Activated CD4-positive, alpha-beta T cell treated with anti-CD3 and anti-CD28 coated beads, Interleukin-2, amount 10 ng/mL, durations not matched to agents 24 days and 14 days (primary cell): ENCODE measurements at regions of chr5 and their contacts with region 1.

Region 1: GRCh38 chr5:74640450-74640953 is at the start of gene ENC1:
- DNase-seq: peak; percentile 93
- H3K4me3 Mint-ChIP-seq: peak within 1 kb of the TSS; percentile 91
- H3K27ac Mint-ChIP-seq: peak within 1 kb of the TSS; percentile 47
- H3K4me1 Mint-ChIP-seq: peaks cover 35% of the 10 kb centered on the region
- H3K27me3 Mint-ChIP-seq: peaks cover 63% of the 10 kb centered on the region
- total RNA-seq, gene ENC1: 1.2 and 2.0 TPM in 2 replicates

Region 2: GRCh38 chr5:73792687-73793320 is 847.7 kb before region 1 on chr5:
- intact Hi-C with region 1: loop called (anchors 10 kb)
- DNase-seq: peak; percentile 88
- H3K4me3 Mint-ChIP-seq: no peak overlapping the region
- H3K27ac Mint-ChIP-seq: no peak overlapping the region
- H3K4me1 Mint-ChIP-seq: peaks cover 6% of the 10 kb centered on the region
- H3K27me3 Mint-ChIP-seq: peaks cover 24% of the 10 kb centered on the region

Region 3: DNA sequence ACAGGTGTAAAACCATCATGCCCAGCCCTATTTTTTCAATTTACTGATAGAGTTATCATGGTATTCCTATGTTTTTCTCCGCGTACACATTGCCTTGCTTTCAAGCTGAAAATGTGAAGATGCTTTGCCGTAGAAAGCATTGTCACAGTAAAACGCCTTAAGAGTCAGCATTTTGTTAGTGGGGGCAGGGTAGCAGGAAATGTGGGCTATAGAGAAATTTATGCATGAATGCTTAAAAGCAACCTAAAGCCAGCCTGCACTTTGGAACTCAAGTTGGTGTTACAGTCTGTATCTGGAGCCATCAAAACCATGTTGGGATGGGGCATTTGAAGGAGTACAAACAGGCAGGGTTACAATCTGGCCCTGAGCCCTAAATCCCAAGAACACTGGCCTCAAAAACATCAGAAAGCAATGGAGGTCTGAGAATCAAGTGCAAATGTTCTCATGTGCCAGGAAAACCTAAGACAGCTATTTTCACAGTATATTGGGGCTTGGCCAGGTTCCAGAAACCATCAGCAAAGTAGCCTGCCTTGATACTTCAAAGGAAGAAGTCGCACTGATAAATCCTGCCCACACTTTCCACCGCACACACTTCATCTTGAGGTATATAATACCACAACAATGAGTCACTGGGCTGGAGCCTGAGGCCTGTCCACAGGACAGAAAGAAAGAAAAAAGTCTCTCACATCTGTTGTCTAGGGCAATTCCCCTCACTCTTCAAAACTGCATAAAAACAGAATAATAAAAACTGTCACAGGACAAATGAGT is 313.7 kb before region 1 on chr5:
- intact Hi-C with region 1: loop called (anchors 10 kb)
- DNase-seq: peak; percentile 64
- H3K4me3 Mint-ChIP-seq: no peak overlapping the region
- H3K27ac Mint-ChIP-seq: no peak overlapping the region
- H3K4me1 Mint-ChIP-seq: peaks cover 4% of the 10 kb centered on the region
- H3K27me3 Mint-ChIP-seq: peaks cover 12% of the 10 kb centered on the region

Region 4: GRCh38 chr5:74394916-74395781 is 245.4 kb before region 1 on chr5:
- intact Hi-C with region 1: loop called (anchors 10 kb)
- DNase-seq: no peak
- H3K4me3 Mint-ChIP-seq: no peak overlapping the region
- H3K27ac Mint-ChIP-seq: no peak overlapping the region
- H3K4me1 Mint-ChIP-seq: peaks cover 2% of the 10 kb centered on the region
- H3K27me3 Mint-ChIP-seq: peaks cover 2% of the 10 kb centered on the region

Region 5: GRCh38 chr5:74622122-74622521 is 18.4 kb before region 1 on chr5:
- intact Hi-C with region 1: loop called (anchors 1 kb)
- DNase-seq: no peak
- H3K4me3 Mint-ChIP-seq: no peak overlapping the region
- H3K27ac Mint-ChIP-seq: no peak overlapping the region
- H3K4me1 Mint-ChIP-seq: peaks cover 8% of the 10 kb centered on the region
- H3K27me3 Mint-ChIP-seq: peaks cover 48% of the 10 kb centered on the region

Region 6: DNA sequence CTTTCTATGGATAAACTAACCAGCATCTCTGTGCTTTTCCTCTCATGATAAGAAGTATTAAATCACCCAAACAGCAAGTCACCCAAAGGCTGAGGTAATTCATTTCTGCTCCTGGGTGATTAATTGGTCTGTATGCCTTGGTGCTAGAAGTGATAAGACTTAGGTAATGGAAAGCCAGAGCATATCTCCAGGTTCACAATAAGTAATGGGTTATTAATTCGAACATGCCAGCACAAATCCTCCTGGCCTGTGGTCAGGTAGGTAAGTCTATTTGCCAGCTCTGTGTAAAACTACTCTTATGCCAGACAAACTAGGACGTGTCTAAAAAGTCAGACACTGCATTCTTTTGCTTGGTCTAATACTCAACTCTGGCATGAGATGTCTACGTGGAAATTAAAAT is 11.2 kb after region 1 on chr5:
- intact Hi-C with region 1: no loop called
- DNase-seq: no peak
- H3K4me3 Mint-ChIP-seq: no peak overlapping the region
- H3K27ac Mint-ChIP-seq: no peak overlapping the region
- H3K4me1 Mint-ChIP-seq: peaks cover 1% of the 10 kb centered on the region
- H3K27me3 Mint-ChIP-seq: peaks cover 23% of the 10 kb centered on the region

Region 7: DNA sequence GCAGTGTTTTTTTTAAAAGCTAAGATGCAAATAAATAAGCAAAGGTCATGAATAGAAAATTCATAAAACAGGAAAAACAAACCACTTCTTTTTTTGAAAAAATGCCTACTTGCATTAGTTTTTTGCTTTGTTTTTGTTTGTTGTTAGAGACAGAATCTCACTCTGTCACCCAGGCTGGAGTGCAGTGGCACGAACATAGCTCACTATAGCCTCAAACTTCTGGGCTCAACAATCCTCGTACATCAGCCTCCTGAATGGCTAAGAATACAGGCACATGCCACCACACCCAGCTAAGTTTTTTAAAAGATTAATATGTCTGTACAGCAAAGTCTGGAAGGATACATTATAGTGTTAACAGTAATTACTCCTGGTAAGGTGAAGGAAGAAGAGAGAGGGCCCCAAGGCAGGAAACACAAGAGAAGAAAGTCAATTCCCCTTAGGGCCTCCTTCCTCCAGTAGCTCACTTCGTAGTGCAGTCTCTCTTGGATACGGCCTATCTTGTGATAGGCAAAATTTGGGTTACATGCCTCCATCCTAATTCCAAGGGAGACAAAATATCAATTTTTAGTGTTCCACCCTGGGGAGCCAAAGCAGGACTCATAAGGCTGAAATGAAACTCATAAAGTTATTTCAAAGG is 210.4 kb after region 1 on chr5:
- intact Hi-C with region 1: no loop called
- DNase-seq: no peak
- H3K4me3 Mint-ChIP-seq: no peak overlapping the region
- H3K27ac Mint-ChIP-seq: no peak overlapping the region
- H3K4me1 Mint-ChIP-seq: peaks cover 16% of the 10 kb centered on the region
- H3K27me3 Mint-ChIP-seq: no peaks in the 10 kb centered on the region